Heart left ventricle (tissue), 16 donors: ENCODE measurements at regions of chr5 and their contacts with region 1.

Region 1: GRCh38 chr5:155260798-155261197 is 247.2 kb downstream of the KIF4B start:
- DNase-seq: no peak
- ATAC-seq: peak in 3 of 4 donors; percentile 33 to 55 (median 39)
- H3K4me3 ChIP-seq: no peak overlapping the region
- H3K27ac ChIP-seq: no peak overlapping the region
- H3K4me1 ChIP-seq: peaks cover 0 to 3% (median 0%) of the 10 kb centered on the region in 12 donors
- H3K27me3 ChIP-seq: no peaks in the 10 kb centered on the region
- CTCF ChIP-seq: peak in 7 of 12 donors; percentile 6 to 38 (median 17)
- POLR2A ChIP-seq: no peak

Region 2: DNA sequence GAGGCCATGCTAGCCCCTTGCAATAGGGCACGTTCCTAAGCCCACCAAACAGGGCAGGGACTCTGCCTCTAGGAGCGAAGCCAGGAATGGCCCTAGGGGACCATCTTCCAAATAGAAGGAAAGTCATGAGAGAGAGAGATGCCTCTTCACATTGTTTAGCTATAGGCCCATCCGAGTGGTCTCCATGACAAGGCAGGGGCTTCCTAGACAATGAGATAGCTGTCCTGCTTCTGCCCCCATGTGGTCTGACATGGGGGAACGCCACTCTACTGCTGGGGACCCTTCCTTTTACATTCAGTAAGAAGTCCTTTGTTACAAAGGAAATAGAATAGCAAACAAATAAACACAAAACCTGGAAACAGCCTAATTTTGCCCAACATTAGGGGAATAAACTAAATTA is 265.1 kb before region 1 on chr5:
- intact Hi-C with region 1: no loop called
- DNase-seq: no peak
- ATAC-seq: no peak
- H3K4me3 ChIP-seq: no peak overlapping the region
- H3K27ac ChIP-seq: no peak overlapping the region
- H3K4me1 ChIP-seq: no peaks in the 10 kb centered on the region
- H3K27me3 ChIP-seq: no peaks in the 10 kb centered on the region
- CTCF ChIP-seq: peak in 1 of 12 donors; percentile 10
- POLR2A ChIP-seq: no peak

Region 3: GRCh38 chr5:155136216-155136850 is 124.5 kb before region 1 on chr5:
- intact Hi-C with region 1: loop called in 2 of 10 experiments (anchors 5 to 10 kb)
- DNase-seq: no peak
- ATAC-seq: peak in 3 of 4 donors; percentile 47 to 58 (median 51)
- H3K4me3 ChIP-seq: no peak overlapping the region
- H3K27ac ChIP-seq: no peak overlapping the region
- H3K4me1 ChIP-seq: peaks cover 0 to 7% (median 0%) of the 10 kb centered on the region in 12 donors
- H3K27me3 ChIP-seq: no peaks in the 10 kb centered on the region
- CTCF ChIP-seq: no peak
- POLR2A ChIP-seq: no peak

Region 4: GRCh38 chr5:155147222-155147621 is 113.6 kb before region 1 on chr5:
- intact Hi-C with region 1: loop called in 1 of 10 experiments (anchors 10 kb)
- DNase-seq: no peak
- ATAC-seq: no peak
- H3K4me3 ChIP-seq: no peak overlapping the region
- H3K27ac ChIP-seq: no peak overlapping the region
- H3K4me1 ChIP-seq: peaks cover 0 to 11% (median 0%) of the 10 kb centered on the region in 12 donors
- H3K27me3 ChIP-seq: no peaks in the 10 kb centered on the region
- CTCF ChIP-seq: peak in 8 of 12 donors; percentile 7 to 33 (median 20)
- POLR2A ChIP-seq: no peak

Region 5: GRCh38 chr5:155485386-155485785 is 224.6 kb after region 1 on chr5:
- intact Hi-C with region 1: loop called in 1 of 10 experiments (anchors 10 kb)
- DNase-seq: no peak
- ATAC-seq: no peak
- H3K4me3 ChIP-seq: no peak overlapping the region
- H3K27ac ChIP-seq: no peak overlapping the region
- H3K4me1 ChIP-seq: peaks cover 0 to 15% (median 0%) of the 10 kb centered on the region in 12 donors
- H3K27me3 ChIP-seq: no peaks in the 10 kb centered on the region
- CTCF ChIP-seq: no peak
- POLR2A ChIP-seq: no peak